ENCODE measurements at regions of chr11 and their contacts with region 1.

Region 1: GRCh38 chr11:122853971-122854446 is 15.7 kb downstream of the CRTAM start:
- DNase-seq: peak; percentile 50 to 61 (median 55)
- H3K4me3 ChIP-seq: no peak overlapping the region
- H3K4me3 Mint-ChIP-seq: no peak overlapping the region
- H3K27ac ChIP-seq: no peak overlapping the region
- H3K27ac Mint-ChIP-seq: no peak overlapping the region
- H3K4me1 ChIP-seq: peaks cover 25% of the 10 kb centered on the region
- H3K4me1 Mint-ChIP-seq: peaks cover 16 to 28% (median 22%) of the 10 kb centered on the region in 4 donors
- H3K27me3 ChIP-seq: no peaks in the 10 kb centered on the region
- H3K27me3 Mint-ChIP-seq: peaks cover 0 to 2% of the 10 kb centered on the region in 2 donors

Region 2: GRCh38 chr11:122578168-122578825 is 275.7 kb before region 1 on chr11:
- CTCF ChIA-PET with region 1: interaction called, 110 read pairs
- POLR2A ChIA-PET with region 1: interaction called, 4 read pairs
- intact Hi-C with region 1: loop called (anchors 1 kb)
- DNase-seq: no peak
- H3K4me3 ChIP-seq: no peak overlapping the region
- H3K4me3 Mint-ChIP-seq: no peak overlapping the region
- H3K27ac ChIP-seq: no peak overlapping the region
- H3K27ac Mint-ChIP-seq: no peak overlapping the region
- H3K4me1 ChIP-seq: peaks cover 8% of the 10 kb centered on the region
- H3K4me1 Mint-ChIP-seq: peaks cover 5 to 9% (median 9%) of the 10 kb centered on the region in 4 donors
- H3K27me3 ChIP-seq: no peaks in the 10 kb centered on the region
- H3K27me3 Mint-ChIP-seq: peaks cover 2 to 7% of the 10 kb centered on the region in 2 donors

Region 3: DNA sequence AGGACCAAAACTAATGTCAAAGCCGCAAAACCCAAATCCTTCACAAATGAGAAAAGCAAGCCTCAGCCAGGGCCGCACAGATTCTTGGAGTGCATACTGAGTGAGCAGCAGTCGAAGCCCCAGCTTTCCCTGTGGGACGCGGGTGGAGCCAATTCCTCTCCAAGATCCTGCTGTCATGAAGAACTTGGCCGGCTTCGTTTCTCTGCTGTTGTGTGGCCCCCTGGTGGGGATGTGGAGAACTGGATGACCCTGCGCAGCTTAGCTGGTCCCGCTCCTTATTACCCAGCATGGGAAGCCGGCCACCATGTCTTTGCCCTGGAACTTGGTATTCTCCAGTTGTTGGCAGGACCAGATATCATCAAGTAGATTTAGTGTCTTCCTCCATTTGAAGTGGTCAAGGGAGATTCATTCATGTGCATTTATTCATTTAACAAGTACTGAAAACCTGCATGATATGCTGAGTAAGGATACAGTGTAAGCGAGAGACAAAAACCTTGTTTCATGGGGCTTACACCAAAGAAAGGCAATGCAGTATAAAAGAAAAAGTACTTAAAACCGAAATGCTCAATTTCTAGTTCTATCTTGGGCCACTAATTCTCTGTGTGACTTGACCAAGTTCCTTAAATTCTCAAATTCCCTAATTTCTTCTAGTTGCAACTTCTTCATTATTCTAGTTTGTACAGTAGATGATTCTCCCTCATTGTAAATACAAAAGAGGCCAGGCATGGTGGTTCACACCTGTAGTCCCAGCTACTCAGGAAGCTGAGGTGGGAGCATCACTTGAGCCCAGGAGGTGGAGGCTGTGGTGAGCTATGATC is 72.4 kb before region 1 on chr11:
- CTCF ChIA-PET with region 1: interaction called, 54 read pairs
- POLR2A ChIA-PET with region 1: no interaction called
- intact Hi-C with region 1: no loop called
- DNase-seq: peak; percentile 62 to 71 (median 67)
- H3K4me3 ChIP-seq: no peak overlapping the region
- H3K4me3 Mint-ChIP-seq: no peak overlapping the region
- H3K27ac ChIP-seq: no peak overlapping the region
- H3K27ac Mint-ChIP-seq: no peak overlapping the region
- H3K4me1 ChIP-seq: no peaks in the 10 kb centered on the region
- H3K4me1 Mint-ChIP-seq: peaks cover 0 to 8% (median 1%) of the 10 kb centered on the region in 4 donors
- H3K27me3 ChIP-seq: no peaks in the 10 kb centered on the region
- H3K27me3 Mint-ChIP-seq: no peaks in the 10 kb centered on the region

Region 4: GRCh38 chr11:122808478-122808869 is 45.5 kb before region 1 on chr11:
- CTCF ChIA-PET with region 1: interaction called, 52 read pairs
- POLR2A ChIA-PET with region 1: interaction called, 3 read pairs
- intact Hi-C with region 1: loop called (anchors 5 kb)
- DNase-seq: no peak
- H3K4me3 ChIP-seq: no peak overlapping the region
- H3K4me3 Mint-ChIP-seq: no peak overlapping the region
- H3K27ac ChIP-seq: no peak overlapping the region
- H3K27ac Mint-ChIP-seq: peak overlapping the region in 6 of 7 donors; percentile 17 to 73 (median 46)
- H3K4me1 ChIP-seq: peaks cover 9% of the 10 kb centered on the region
- H3K4me1 Mint-ChIP-seq: peaks cover 15 to 23% (median 19%) of the 10 kb centered on the region in 4 donors
- H3K27me3 ChIP-seq: no peaks in the 10 kb centered on the region
- H3K27me3 Mint-ChIP-seq: no peaks in the 10 kb centered on the region

Region 5: DNA sequence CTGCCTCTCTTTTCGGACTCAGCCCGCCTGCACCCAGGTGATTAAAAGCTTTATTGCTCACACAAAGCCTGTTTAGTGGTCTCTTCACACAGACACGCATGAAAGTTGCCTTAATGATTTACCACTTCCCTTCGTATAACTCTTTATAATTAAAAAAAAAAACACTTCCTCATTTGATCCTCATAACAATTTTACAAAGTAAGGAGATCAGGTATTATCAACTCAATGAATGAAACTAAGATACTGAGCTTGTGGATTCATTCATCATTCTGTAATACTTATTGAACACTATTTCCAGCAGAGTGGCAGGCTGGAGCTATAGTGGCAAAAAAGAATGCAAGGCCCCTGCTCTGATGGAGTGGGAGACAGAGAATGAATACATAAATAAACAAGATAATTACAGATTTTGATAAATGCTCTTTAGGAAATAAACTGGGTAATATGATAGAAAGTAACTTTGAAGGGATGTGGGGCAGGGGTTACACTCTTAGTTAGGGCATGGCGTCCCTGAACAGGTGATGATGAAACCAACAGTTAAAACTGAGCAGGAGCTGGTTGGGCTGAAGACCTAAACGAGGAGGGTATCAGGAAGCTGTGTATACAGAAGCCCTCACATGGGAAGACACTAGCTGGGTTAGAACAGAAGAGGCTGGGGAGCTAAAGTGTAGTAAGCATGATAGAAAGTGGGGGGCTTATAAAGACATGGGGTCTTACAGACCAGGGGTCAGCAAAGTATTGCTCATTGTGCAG is 21.1 kb before region 1 on chr11:
- CTCF ChIA-PET with region 1: interaction called, 31 read pairs
- POLR2A ChIA-PET with region 1: interaction called, 6 read pairs
- intact Hi-C with region 1: no loop called
- DNase-seq: no peak
- H3K4me3 ChIP-seq: no peak overlapping the region
- H3K4me3 Mint-ChIP-seq: no peak overlapping the region
- H3K27ac ChIP-seq: no peak overlapping the region
- H3K27ac Mint-ChIP-seq: no peak overlapping the region
- H3K4me1 ChIP-seq: no peaks in the 10 kb centered on the region
- H3K4me1 Mint-ChIP-seq: peaks cover 0 to 2% (median 0%) of the 10 kb centered on the region in 4 donors
- H3K27me3 ChIP-seq: no peaks in the 10 kb centered on the region
- H3K27me3 Mint-ChIP-seq: peaks cover 8 to 11% of the 10 kb centered on the region in 2 donors

Region 6: DNA sequence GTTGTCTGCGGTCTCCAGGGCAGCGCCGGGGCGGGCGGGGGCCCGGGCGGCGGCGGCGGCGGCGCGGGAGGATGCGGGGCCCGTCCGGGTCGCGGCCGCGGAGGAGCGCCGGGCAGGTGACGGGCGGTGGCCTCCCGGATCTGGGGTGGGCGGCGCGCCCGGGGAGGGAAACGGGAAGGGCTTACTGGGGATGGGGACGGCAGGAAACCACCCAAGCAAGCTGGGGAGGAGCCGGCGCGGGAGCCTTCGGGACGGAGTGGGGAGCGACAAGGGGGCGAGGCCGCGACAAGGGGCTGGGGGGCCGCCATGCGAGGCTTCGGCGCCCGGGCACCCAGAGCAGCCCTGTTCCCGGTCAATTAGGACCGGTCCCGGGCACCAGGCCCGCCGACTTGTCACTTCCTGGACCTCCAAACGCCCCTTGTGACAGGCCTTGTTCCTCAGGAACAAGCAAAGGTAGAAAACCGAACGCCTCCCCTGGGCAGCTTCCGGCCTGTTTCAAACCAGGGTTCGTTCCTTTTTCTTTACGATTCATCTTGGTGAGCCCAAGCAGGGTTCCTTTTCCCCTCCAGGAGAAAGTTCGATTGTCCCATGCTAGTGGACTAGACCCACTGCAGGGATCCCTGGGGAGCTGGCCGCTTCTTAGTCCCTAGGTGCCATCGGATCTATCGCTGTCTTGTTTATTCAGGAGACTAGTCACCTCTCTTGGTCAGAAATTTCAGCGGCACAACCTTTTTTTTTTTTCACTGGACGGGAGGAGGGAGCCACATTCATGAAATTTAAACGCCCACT is 29.0 kb after region 1 on chr11:
- CTCF ChIA-PET with region 1: interaction called, 10 read pairs
- POLR2A ChIA-PET with region 1: interaction called, 4 read pairs
- intact Hi-C with region 1: no loop called
- DNase-seq: peak; percentile 43 to 53 (median 52)
- H3K4me3 ChIP-seq: peak overlapping the region; percentile 42 to 56
- H3K4me3 Mint-ChIP-seq: peak overlapping the region; percentile 83 to 91 (median 88)
- H3K27ac ChIP-seq: peak overlapping the region; percentile 63
- H3K27ac Mint-ChIP-seq: peak overlapping the region; percentile 64 to 93 (median 79)
- H3K4me1 ChIP-seq: peaks cover 20% of the 10 kb centered on the region
- H3K4me1 Mint-ChIP-seq: peaks cover 20 to 26% (median 24%) of the 10 kb centered on the region in 4 donors
- H3K27me3 ChIP-seq: no peaks in the 10 kb centered on the region
- H3K27me3 Mint-ChIP-seq: no peaks in the 10 kb centered on the region

Region 7: GRCh38 chr11:123054301-123055065 is 200.5 kb after region 1 on chr11:
- CTCF ChIA-PET with region 1: interaction called, 15 read pairs
- POLR2A ChIA-PET with region 1: interaction called, 6 read pairs
- intact Hi-C with region 1: no loop called
- DNase-seq: peak; percentile 65 to 72 (median 69)
- H3K4me3 ChIP-seq: no peak overlapping the region
- H3K4me3 Mint-ChIP-seq: peak overlapping the region in 6 of 8 donors; percentile 52 to 100 (median 86)
- H3K27ac ChIP-seq: no peak overlapping the region
- H3K27ac Mint-ChIP-seq: peak overlapping the region; percentile 61 to 97 (median 87)
- H3K4me1 ChIP-seq: peaks cover 56% of the 10 kb centered on the region
- H3K4me1 Mint-ChIP-seq: peaks cover 46 to 62% (median 51%) of the 10 kb centered on the region in 4 donors
- H3K27me3 ChIP-seq: no peaks in the 10 kb centered on the region
- H3K27me3 Mint-ChIP-seq: no peaks in the 10 kb centered on the region